Common myeloid progenitor, CD34-positive (primary cell): ENCODE measurements at regions of chr2 and their contacts with region 1.

Region 1: DNA sequence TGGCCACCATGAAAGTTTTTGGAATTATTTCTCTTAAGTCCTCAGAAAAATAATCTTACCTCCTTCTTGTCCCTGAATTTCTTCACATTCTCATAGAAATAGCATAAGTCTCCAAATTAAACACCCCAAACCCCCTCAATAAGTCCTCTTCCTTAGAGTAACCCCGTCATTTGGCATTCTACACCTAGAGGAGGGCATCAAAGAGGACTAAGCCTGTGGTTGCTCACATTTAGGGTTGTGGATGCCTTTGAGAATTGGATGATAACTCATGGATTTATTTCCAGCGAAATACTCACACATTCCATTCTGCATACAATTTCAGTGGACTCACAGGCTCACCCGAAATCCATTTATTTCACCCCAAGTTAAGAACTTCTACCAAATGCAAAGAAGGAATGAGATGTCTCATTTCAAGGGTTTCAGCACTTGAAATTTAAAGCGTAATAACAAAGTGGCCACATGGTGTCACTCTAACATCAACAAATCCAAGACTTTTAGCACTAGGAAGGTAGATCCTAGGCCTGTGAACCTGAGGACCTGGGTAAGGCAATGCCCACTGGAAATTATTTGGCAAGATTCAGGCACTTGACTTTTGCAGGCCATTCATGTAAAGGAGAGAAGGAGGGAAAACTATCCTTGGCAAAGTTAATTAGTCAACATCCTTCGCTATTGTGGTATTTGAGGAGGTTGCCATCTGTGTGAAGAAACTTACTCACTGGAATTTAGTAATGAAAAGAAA is 24.6 kb downstream of the DYTN start:
- DNase-seq: peak; percentile 81 to 89 (median 82)
- H3K4me3 ChIP-seq: no peak overlapping the region
- H3K27ac ChIP-seq: no peak overlapping the region
- H3K4me1 ChIP-seq: peaks cover 0 to 29% (median 11%) of the 10 kb centered on the region in 4 experiments
- H3K27me3 ChIP-seq: no peaks in the 10 kb centered on the region

Region 2: DNA sequence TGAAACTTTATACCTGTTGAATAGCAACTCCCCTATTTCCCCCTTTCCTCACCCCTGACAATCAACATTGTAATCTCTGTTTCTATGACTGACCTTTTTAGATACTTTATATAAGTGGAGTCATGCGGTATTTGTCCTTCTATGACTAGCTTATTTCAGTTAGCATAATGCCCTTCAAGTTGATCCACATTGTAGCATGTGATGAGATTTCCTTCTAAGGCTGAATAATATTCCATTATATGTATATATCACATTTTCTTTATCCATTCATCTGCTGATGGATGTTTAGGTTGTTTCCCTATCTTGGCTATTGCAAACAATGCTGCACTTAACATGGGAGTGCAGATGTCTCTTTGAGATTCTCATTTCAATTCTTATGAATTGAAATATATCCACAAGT is 81.3 kb after region 1 on chr2:
- CTCF ChIA-PET with region 1: interaction called, 159 read pairs
- POLR2A ChIA-PET with region 1: interaction called, 3 read pairs
- DNase-seq: no peak
- H3K4me3 ChIP-seq: no peak overlapping the region
- H3K27ac ChIP-seq: no peak overlapping the region
- H3K4me1 ChIP-seq: no peaks in the 10 kb centered on the region
- H3K27me3 ChIP-seq: no peaks in the 10 kb centered on the region

Region 3: GRCh38 chr2:206783718-206784117 is 90.2 kb after region 1 on chr2:
- CTCF ChIA-PET with region 1: interaction called, 159 read pairs
- POLR2A ChIA-PET with region 1: no interaction called
- DNase-seq: peak in 2 of 3 donors; percentile 31 to 38
- H3K4me3 ChIP-seq: no peak overlapping the region
- H3K27ac ChIP-seq: no peak overlapping the region
- H3K4me1 ChIP-seq: no peaks in the 10 kb centered on the region
- H3K27me3 ChIP-seq: no peaks in the 10 kb centered on the region

Region 4: DNA sequence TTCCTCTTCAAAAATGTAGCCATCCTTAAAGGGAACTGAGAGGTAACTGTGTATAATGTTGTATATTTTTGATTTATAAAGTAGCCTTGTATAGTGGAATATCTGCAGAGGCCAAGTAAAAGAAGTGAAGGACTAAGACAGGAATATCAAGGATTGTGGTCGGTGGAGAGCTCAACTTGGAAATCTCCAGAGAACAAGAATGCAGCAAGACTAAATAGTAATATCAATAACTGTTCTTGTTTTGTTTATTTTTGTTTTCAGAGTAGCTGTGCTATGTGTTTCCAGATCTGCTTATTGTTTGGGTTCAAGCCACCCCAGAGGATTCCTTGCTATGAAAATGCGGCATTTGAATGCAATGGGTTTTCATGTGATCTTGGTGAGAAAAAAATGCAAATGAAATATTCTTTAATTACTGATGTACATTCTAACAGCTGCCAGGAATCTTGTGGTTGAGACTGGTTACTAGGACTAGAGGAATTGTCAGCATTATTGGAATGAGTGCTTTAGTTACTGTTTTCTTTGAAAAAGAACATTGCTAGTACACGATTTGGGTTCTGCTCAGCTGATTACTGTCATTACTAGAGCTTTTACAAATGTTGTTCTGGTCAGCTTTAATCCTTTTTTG is 96.9 kb after region 1 on chr2:
- CTCF ChIA-PET with region 1: interaction called, 159 read pairs
- POLR2A ChIA-PET with region 1: no interaction called
- DNase-seq: no peak
- H3K4me3 ChIP-seq: no peak overlapping the region
- H3K27ac ChIP-seq: peak overlapping the region in 1 of 2 experiments; percentile 16
- H3K4me1 ChIP-seq: no peaks in the 10 kb centered on the region
- H3K27me3 ChIP-seq: no peaks in the 10 kb centered on the region